ENCODE measurements at regions of chr9 and their contacts with region 1.

Region 1: DNA sequence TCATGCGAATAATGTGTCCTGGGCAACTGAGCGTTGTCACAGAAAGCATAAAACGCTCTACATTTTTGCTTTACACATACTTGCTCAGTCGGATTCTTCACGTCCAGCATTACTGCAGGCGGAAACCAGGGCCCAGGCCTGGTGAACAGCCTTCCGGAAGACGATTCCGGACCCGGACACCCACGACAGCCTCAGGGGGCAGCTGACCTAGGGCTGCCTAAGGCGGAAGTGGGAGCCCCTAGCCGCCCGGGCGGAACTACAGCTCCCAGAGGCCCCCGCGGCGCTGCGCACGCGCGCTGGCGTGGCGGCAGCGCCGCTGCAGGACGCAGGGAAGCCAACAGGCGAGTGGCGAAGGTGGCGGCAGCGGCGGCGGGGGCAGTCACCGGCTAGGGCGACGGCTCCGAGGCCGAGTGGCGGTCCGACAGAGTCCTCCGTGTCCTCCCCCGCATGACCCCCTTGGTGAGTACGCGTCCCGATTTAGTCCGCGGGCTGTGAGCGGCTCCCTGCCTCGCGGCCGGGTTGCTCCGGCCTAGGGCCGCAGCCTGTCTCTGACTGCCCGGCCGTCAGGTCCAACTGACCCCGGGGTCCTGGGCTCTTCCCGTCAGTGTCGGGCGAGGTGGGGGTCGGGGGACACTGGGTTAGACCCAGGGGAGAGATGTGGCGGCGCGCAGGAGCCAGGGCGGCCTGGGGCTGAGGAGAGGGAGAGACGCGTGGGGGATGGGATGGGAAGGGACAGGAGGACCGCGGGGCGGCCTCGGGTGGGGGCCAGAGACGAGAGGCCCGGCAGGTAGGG is at the start of gene GAPVD1:
- DNase-seq: peak; percentile 93 to 95 (median 93)
- H3K4me3 ChIP-seq: peak within 1 kb of the TSS; percentile 90 to 99 (median 97)
- H3K27ac ChIP-seq: peak within 1 kb of the TSS; percentile 74 to 85
- H3K4me1 ChIP-seq: peaks cover 24 to 54% (median 30%) of the 10 kb centered on the region in 4 experiments
- H3K27me3 ChIP-seq: no peaks in the 10 kb centered on the region

Region 2: DNA sequence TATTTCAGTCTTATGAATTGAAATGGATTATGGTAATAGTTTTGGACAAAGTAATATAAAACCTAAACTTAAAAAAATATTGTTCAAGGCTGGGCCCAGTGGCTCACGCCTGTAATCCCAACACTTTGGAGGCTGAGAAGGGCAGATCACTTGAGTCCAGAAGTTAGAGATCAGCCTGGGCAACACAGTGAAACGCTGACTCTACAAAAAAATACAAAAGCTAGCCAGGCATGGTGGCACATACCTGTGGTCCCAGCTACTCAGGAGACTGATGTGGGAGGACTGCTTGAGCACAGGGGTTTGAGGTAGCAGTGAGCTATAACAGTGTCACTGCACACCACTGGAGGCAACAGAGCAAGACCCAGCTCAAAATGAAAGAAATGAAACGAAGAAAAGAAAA is 200.3 kb before region 1 on chr9:
- CTCF ChIA-PET with region 1: no interaction called
- POLR2A ChIA-PET with region 1: no interaction called
- DNase-seq: no peak
- H3K4me3 ChIP-seq: no peak overlapping the region
- H3K27ac ChIP-seq: no peak overlapping the region
- H3K4me1 ChIP-seq: no peaks in the 10 kb centered on the region
- H3K27me3 ChIP-seq: no peaks in the 10 kb centered on the region

Region 3: GRCh38 chr9:125241000-125241862 is 20.5 kb before region 1 on chr9 and contains the start of gene HSPA5:
- CTCF ChIA-PET with region 1: interaction called, 8 read pairs
- POLR2A ChIA-PET with region 1: interaction called, 34 read pairs
- DNase-seq: peak; percentile 99 to 100 (median 100)
- H3K4me3 ChIP-seq: peak within 1 kb of the TSS; percentile 55 to 100 (median 97)
- H3K27ac ChIP-seq: peak within 1 kb of the TSS; percentile 98 to 99
- H3K4me1 ChIP-seq: peaks cover 9 to 37% (median 25%) of the 10 kb centered on the region in 4 experiments
- H3K27me3 ChIP-seq: no peaks in the 10 kb centered on the region

Measured in common myeloid progenitor, CD34-positive (primary cell).